Naive thymus-derived CD4-positive, alpha-beta T cell (primary cell): ENCODE measurements at regions of chr17 and their contacts with region 1.

Region 1: GRCh38 chr17:78736526-78737079 is 45.5 kb downstream of the CYTH1 start:
- DNase-seq: peak; percentile 45 to 82 (median 78)
- ATAC-seq: peak; percentile 91
- H3K4me3 ChIP-seq: peak overlapping the region; percentile 75
- H3K4me3 Mint-ChIP-seq: peak overlapping the region; percentile 90 to 97 (median 94)
- H3K27ac ChIP-seq: peak overlapping the region; percentile 79
- H3K27ac Mint-ChIP-seq: peak overlapping the region; percentile 88 to 95 (median 92)
- H3K4me1 ChIP-seq: peaks cover 71 to 80% of the 10 kb centered on the region in 2 donors
- H3K4me1 Mint-ChIP-seq: peaks cover 78 to 97% (median 88%) of the 10 kb centered on the region in 7 donors
- H3K27me3 ChIP-seq: no peaks in the 10 kb centered on the region
- H3K27me3 Mint-ChIP-seq: no peaks in the 10 kb centered on the region

Region 2: DNA sequence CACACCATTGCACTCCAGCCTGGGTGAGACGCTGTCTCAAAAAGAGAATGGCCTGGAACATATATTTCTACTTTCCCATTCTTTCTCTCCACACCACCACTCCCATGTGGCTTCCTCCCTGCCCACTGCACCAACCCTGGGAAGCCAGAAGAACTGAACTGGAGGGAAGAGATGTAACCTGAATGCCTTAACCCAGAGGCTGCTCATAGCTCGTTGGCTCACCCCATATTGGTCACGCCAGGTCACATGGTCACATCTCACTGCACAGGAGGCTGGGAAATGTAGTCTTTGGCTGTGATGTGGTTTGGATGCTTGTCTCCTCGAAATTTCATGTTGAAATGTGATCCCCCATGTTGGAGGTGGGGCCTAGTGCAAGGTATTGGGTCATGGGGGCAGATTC is 153.5 kb before region 1 on chr17:
- CTCF ChIA-PET with region 1: no interaction called
- POLR2A ChIA-PET with region 1: no interaction called
- intact Hi-C with region 1: no loop called
- DNase-seq: no peak
- ATAC-seq: peak; percentile 56
- H3K4me3 ChIP-seq: no peak overlapping the region
- H3K4me3 Mint-ChIP-seq: no peak overlapping the region
- H3K27ac ChIP-seq: no peak overlapping the region
- H3K27ac Mint-ChIP-seq: no peak overlapping the region
- H3K4me1 ChIP-seq: no peaks in the 10 kb centered on the region
- H3K4me1 Mint-ChIP-seq: no peaks in the 10 kb centered on the region
- H3K27me3 ChIP-seq: no peaks in the 10 kb centered on the region
- H3K27me3 Mint-ChIP-seq: peaks cover 0 to 35% (median 3%) of the 10 kb centered on the region in 5 donors

Region 3: DNA sequence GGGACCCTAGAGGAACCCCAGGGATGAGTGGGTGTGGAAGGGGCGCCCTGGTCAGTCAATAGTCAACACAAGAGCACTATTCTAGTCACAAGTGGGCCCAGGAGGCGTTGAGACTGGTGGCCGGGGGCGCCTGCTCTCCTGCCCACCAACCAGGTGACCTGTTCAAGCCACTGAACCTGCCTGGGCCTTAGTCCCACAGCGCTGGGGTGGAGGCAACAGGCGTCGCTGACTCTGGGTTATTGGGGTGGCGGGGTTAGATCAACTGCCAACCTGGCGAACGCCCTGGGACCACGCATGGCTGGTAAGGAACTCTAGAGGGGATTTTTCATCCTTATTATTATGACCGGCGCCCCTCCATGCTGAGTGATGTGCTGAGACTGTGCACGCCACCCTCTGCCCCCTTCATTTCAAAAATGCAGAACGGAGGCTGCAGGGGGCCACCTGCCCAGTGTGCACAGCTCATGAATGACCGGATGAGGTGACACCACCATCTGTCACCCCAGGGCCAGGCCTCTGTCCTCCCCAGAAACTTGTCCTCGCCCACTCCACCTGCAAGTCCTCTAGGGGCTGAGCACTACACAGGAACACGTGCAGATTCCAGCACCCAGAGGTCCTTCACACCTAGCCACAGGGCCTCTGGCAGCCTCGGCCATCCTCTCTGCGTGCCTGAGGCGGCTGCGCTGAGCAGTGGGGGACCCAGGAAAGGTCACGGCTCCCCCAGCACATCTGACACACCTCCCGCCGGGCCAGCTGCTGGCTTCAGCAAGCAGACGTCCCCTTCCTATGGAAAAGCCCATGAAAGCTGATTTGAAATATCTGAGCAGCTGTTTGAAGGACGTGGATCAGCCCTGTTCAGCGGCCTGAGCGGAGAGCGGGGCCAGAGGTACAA is 107.8 kb before region 1 on chr17:
- CTCF ChIA-PET with region 1: no interaction called
- POLR2A ChIA-PET with region 1: no interaction called
- intact Hi-C with region 1: no loop called
- DNase-seq: no peak
- ATAC-seq: no peak
- H3K4me3 ChIP-seq: no peak overlapping the region
- H3K4me3 Mint-ChIP-seq: no peak overlapping the region
- H3K27ac ChIP-seq: no peak overlapping the region
- H3K27ac Mint-ChIP-seq: peak overlapping the region in 1 of 9 donors; percentile 25
- H3K4me1 ChIP-seq: peaks cover 0 to 7% of the 10 kb centered on the region in 2 donors
- H3K4me1 Mint-ChIP-seq: peaks cover 9 to 19% (median 15%) of the 10 kb centered on the region in 7 donors
- H3K27me3 ChIP-seq: no peaks in the 10 kb centered on the region
- H3K27me3 Mint-ChIP-seq: peaks cover 0 to 2% (median 0%) of the 10 kb centered on the region in 5 donors

Region 4: DNA sequence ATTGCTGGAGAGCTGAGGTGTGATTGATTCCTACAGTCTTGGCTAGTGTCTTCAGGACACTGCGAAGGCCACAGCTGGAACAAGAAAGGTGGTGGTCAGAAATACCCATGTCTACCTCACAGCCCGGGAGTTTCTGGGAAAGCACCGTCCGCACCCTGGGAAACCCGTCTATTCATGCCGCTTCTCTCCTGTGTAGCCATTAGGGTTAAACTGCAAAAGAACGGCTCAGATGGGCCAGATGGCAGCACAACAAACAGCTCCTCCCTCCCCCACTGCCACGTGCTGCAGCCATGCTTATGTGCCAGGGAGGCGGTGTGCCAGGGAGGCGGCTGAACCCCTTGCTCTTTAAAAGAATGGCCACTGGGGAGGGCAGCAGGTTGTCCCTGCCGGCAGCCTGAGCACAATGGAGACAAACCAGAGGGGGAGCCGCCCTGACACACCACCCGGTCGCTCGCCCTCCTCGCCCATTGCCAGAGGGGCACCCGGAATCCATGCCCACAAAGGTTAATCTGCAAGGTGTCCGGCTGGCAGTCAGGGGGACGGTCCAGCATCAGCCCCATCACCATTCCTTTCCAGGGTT is 19.7 kb before region 1 on chr17:
- CTCF ChIA-PET with region 1: interaction called, 7 read pairs
- POLR2A ChIA-PET with region 1: interaction called, 20 read pairs
- intact Hi-C with region 1: loop called (anchors 2 kb)
- DNase-seq: peak in 6 of 9 donors; percentile 31 to 60 (median 42)
- ATAC-seq: peak; percentile 55
- H3K4me3 ChIP-seq: peak overlapping the region; percentile 5
- H3K4me3 Mint-ChIP-seq: peak overlapping the region; percentile 53 to 88 (median 78)
- H3K27ac ChIP-seq: peak overlapping the region; percentile 68
- H3K27ac Mint-ChIP-seq: peak overlapping the region in 8 of 9 donors; percentile 77 to 92 (median 88)
- H3K4me1 ChIP-seq: peaks cover 81 to 84% of the 10 kb centered on the region in 2 donors
- H3K4me1 Mint-ChIP-seq: peaks cover 71 to 98% (median 91%) of the 10 kb centered on the region in 7 donors
- H3K27me3 ChIP-seq: no peaks in the 10 kb centered on the region
- H3K27me3 Mint-ChIP-seq: no peaks in the 10 kb centered on the region

Region 5: DNA sequence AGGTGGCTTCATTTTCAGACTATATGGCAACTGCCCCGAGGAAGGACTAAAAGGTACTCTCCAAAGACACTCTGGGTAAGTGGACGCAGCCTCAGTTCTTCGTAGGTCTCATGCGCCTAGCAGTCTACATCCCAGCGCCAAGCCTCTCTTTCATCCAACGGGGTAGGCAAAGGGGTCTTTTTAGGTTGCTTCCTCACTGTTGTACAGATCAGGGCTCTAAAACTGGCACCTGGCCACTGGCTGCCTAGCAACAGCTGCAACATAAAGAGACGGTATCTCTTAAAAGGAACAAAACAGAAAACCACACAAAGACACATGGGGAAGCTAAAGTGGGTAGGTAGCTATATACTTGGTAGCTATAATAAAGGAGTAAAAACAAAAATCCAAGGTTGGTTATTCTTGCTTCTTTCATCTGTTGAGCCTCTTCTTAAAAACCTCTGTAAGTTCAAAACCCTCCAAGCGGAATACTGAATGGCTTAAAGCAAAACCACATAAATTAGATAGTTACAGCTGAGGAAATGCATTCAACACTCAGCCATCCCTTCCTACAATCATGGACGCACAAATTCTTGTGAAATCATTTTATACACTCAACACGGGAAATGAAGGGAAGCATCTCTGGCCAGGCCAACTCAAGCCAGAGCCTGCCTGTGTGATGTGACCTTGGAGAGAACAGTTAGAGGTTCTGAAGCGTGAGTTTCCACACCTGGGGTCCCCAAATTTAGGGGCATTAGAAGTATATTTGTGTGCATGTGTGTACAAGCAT is 22.8 kb after region 1 on chr17:
- CTCF ChIA-PET with region 1: interaction called, 4 read pairs
- POLR2A ChIA-PET with region 1: interaction called, 16 read pairs
- intact Hi-C with region 1: no loop called
- DNase-seq: peak; percentile 56 to 96 (median 93)
- ATAC-seq: peak; percentile 91
- H3K4me3 ChIP-seq: peak overlapping the region; percentile 53
- H3K4me3 Mint-ChIP-seq: peak overlapping the region; percentile 64 to 85 (median 80)
- H3K27ac ChIP-seq: peak overlapping the region; percentile 93
- H3K27ac Mint-ChIP-seq: peak overlapping the region; percentile 83 to 98 (median 97)
- H3K4me1 ChIP-seq: peaks cover 75 to 77% of the 10 kb centered on the region in 2 donors
- H3K4me1 Mint-ChIP-seq: peaks cover 43 to 88% (median 83%) of the 10 kb centered on the region in 7 donors
- H3K27me3 ChIP-seq: no peaks in the 10 kb centered on the region
- H3K27me3 Mint-ChIP-seq: no peaks in the 10 kb centered on the region

Region 6: DNA sequence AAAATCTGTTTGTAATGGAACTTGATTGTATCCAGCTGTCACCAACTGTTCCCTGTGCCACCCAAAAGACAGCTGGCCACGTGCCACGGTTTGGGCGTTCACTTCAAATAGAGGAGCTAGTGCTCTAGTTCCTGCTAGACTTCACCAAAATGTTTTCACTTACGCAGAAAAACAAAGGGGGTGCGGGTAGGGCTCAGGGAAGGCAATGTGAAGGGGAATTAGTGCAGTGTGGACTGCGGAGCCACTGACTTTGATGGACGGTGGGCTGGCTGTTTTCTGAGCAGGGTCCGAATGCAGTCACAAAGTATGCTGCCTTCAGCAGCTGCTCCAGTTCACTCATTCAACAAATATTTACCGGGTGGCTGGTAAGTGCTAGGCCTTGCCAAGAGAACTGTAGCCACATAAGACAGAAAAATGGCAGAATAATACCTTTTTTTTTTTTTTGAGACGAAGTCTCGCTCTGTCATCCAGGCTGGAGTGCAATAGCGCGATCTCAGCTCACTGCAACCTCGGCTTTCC is 53.1 kb after region 1 on chr17:
- CTCF ChIA-PET with region 1: interaction called, 3 read pairs
- POLR2A ChIA-PET with region 1: interaction called, 4 read pairs
- intact Hi-C with region 1: loop called in 1 of 2 experiments (anchors 1 kb)
- DNase-seq: peak in 8 of 9 donors; percentile 45 to 90 (median 86)
- ATAC-seq: peak; percentile 80
- H3K4me3 ChIP-seq: no peak overlapping the region
- H3K4me3 Mint-ChIP-seq: peak overlapping the region; percentile 36 to 82 (median 74)
- H3K27ac ChIP-seq: peak overlapping the region; percentile 72
- H3K27ac Mint-ChIP-seq: peak overlapping the region; percentile 69 to 98 (median 96)
- H3K4me1 ChIP-seq: peaks cover 37 to 65% of the 10 kb centered on the region in 2 donors
- H3K4me1 Mint-ChIP-seq: peaks cover 40 to 91% (median 71%) of the 10 kb centered on the region in 7 donors
- H3K27me3 ChIP-seq: no peaks in the 10 kb centered on the region
- H3K27me3 Mint-ChIP-seq: no peaks in the 10 kb centered on the region

Region 7: GRCh38 chr17:79009397-79010308 is 273.1 kb after region 1 on chr17 and contains the start of gene CANT1:
- CTCF ChIA-PET with region 1: no interaction called
- POLR2A ChIA-PET with region 1: no interaction called
- intact Hi-C with region 1: no loop called
- DNase-seq: peak; percentile 74 to 92 (median 85)
- ATAC-seq: peak; percentile 97
- H3K4me3 ChIP-seq: peak within 1 kb of the TSS; percentile 86
- H3K4me3 Mint-ChIP-seq: peak within 1 kb of the TSS; percentile 85 to 99 (median 92)
- H3K27ac ChIP-seq: peak within 1 kb of the TSS; percentile 86
- H3K27ac Mint-ChIP-seq: peak within 1 kb of the TSS; percentile 90 to 99 (median 96)
- H3K4me1 ChIP-seq: peaks cover 26 to 45% of the 10 kb centered on the region in 2 donors
- H3K4me1 Mint-ChIP-seq: peaks cover 31 to 59% (median 53%) of the 10 kb centered on the region in 7 donors
- H3K27me3 ChIP-seq: no peaks in the 10 kb centered on the region
- H3K27me3 Mint-ChIP-seq: peaks cover 0 to 21% (median 3%) of the 10 kb centered on the region in 5 donors
- total RNA-seq, gene CANT1: 40.1 to 82.2 (median 43.0) TPM